ENCODE measurements at regions of chr7 and their contacts with region 1.

Region 1: DNA sequence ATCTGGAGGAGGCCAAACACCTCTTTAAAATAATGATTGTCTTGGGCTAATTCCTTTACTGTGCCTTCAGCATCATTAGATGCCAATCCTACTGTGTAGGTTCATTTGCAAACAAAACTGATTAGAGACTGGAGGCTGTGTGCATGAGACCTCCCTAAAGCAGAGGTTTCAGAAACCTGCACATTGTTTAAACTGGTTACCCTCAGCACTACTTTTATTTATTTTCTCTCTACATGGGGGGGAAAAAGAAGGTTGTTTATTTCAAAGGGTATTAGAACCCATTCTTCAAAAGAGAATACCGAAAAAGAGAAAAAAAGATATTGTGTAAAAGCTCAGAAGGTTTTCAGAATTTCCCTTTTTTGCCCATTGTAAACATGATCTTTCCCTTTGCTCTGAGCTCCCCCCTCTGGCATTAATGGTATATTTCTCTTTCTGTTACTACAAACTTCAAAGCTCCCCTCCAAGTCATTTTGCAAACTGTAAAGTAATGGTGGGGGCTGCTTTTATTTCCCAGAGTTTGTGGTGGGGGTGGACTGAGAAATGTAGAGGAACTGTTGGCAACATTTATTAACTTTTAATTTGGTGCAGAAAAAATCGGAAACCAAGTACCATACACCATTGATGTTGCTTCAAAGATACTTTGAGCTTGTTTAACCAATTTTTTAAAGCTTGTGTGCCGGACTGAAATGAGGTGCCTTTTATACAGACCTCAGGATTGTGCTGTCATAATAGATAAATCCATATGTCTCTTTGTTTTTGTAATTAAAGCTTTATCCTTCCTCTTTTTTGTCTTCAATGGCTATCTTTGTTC is 181.4 kb downstream of the EXOC4 start:
- DNase-seq: peak; percentile 33 to 46 (median 41)
- ATAC-seq: peak; percentile 86
- H3K4me3 ChIP-seq: no peak overlapping the region
- H3K27ac ChIP-seq: no peak overlapping the region
- H3K4me1 ChIP-seq: no peaks in the 10 kb centered on the region
- H3K27me3 ChIP-seq: no peaks in the 10 kb centered on the region
- CTCF ChIP-seq: peak; percentile 50 to 84 (median 56); a peak in 5 of 6 replicates
- EP300 ChIP-seq: no peak
- POLR2A ChIP-seq: no peak
- RAD21 ChIP-seq: peak; percentile 83 to 88

Region 2: DNA sequence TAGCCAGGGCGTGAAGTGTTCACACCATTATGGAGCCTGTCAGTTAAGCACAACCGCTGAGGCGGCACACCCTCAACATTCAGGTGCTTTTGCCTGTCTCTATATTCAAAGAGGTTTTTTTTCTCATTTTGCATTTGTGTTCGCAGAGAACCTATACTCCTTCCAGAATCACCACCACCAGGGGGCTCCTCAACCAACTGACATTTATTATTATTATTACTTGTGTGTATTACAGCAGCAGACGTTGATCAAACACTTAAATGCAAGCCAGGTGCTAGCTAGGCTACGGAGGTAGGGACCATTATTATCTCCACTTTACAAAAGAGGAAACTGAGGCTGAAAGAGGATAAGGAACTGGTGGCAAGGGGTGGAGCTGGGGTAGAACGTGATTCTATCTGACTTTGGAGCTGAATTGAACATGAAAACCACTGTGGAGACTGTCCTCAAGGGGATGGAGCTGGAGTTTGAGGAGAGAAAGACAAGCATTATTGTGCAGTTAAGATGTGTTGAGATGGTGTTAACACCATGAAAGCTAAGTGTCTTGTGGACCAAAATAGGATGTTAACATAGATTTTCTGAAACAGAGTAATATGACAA is 724.2 kb before region 1 on chr7:
- CTCF ChIA-PET with region 1: interaction called, 4 read pairs
- POLR2A ChIA-PET with region 1: no interaction called
- in situ Hi-C with region 1: loop called (anchors 10 kb)
- intact Hi-C with region 1: loop called (anchors 1 kb)
- DNase-seq: peak; percentile 36 to 49 (median 42)
- ATAC-seq: peak; percentile 84
- H3K4me3 ChIP-seq: no peak overlapping the region
- H3K27ac ChIP-seq: no peak overlapping the region
- H3K4me1 ChIP-seq: no peaks in the 10 kb centered on the region
- H3K27me3 ChIP-seq: peaks cover 33 to 42% of the 10 kb centered on the region in 2 experiments
- CTCF ChIP-seq: peak; percentile 59 to 70 (median 67); a peak in 5 of 6 replicates
- EP300 ChIP-seq: no peak
- POLR2A ChIP-seq: no peak
- RAD21 ChIP-seq: peak; percentile 52 to 73

Region 3: GRCh38 chr7:132930881-132931280 is 503.4 kb before region 1 on chr7:
- CTCF ChIA-PET with region 1: no interaction called
- POLR2A ChIA-PET with region 1: no interaction called
- in situ Hi-C with region 1: no loop called
- intact Hi-C with region 1: loop called (anchors 10 kb)
- DNase-seq: peak; percentile 36 to 44 (median 37)
- ATAC-seq: peak; percentile 81
- H3K4me3 ChIP-seq: no peak overlapping the region
- H3K27ac ChIP-seq: no peak overlapping the region
- H3K4me1 ChIP-seq: no peaks in the 10 kb centered on the region
- H3K27me3 ChIP-seq: no peaks in the 10 kb centered on the region
- CTCF ChIP-seq: peak; percentile 56 to 67 (median 57)
- EP300 ChIP-seq: no peak
- POLR2A ChIP-seq: no peak
- RAD21 ChIP-seq: peak in 1 of 2 experiments; percentile 62; a peak in 3 of 4 replicates

Region 4: GRCh38 chr7:133230591-133231194 is 203.6 kb before region 1 on chr7:
- CTCF ChIA-PET with region 1: no interaction called
- POLR2A ChIA-PET with region 1: no interaction called
- in situ Hi-C with region 1: no loop called
- intact Hi-C with region 1: loop called (anchors 10 kb)
- DNase-seq: peak; percentile 65 to 81 (median 76)
- ATAC-seq: peak; percentile 86
- H3K4me3 ChIP-seq: no peak overlapping the region
- H3K27ac ChIP-seq: no peak overlapping the region
- H3K4me1 ChIP-seq: no peaks in the 10 kb centered on the region
- H3K27me3 ChIP-seq: peaks cover 24 to 35% of the 10 kb centered on the region in 2 experiments
- CTCF ChIP-seq: peak; percentile 67 to 90 (median 85)
- EP300 ChIP-seq: no peak
- POLR2A ChIP-seq: no peak
- RAD21 ChIP-seq: peak; percentile 52 to 77

Region 5: DNA sequence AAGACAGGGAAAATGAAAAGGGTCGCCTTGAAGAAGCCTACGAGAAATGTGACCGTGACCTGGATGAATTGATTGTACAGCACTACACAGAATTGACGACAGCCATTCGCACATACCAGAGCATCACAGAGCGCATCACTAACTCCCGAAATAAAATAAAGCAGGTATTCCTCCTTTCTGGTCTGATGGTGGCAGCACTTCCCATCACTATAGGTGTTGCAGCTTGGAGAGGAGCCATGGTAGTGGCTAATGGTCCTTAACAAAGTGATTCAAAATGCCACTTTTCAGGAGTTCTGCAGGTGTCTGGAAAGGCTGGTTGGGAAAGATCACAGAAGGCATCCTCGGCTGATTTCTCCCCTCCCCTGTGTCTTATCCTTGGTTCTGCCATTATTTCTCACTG is 159.3 kb before region 1 on chr7:
- CTCF ChIA-PET with region 1: no interaction called
- POLR2A ChIA-PET with region 1: no interaction called
- in situ Hi-C with region 1: no loop called
- intact Hi-C with region 1: loop called (anchors 2 kb)
- DNase-seq: peak in 1 of 4 experiments; percentile 41
- ATAC-seq: peak; percentile 89
- H3K4me3 ChIP-seq: no peak overlapping the region
- H3K27ac ChIP-seq: no peak overlapping the region
- H3K4me1 ChIP-seq: no peaks in the 10 kb centered on the region; a peak in 1 of 5 replicates
- H3K27me3 ChIP-seq: no peaks in the 10 kb centered on the region
- CTCF ChIP-seq: peak; percentile 46 to 57 (median 49); a peak in 5 of 6 replicates
- EP300 ChIP-seq: no peak
- POLR2A ChIP-seq: no peak
- RAD21 ChIP-seq: peak; percentile 28 to 63; a peak in 2 of 4 replicates

Region 6: GRCh38 chr7:133445617-133446016 is 11.4 kb after region 1 on chr7:
- CTCF ChIA-PET with region 1: no interaction called
- POLR2A ChIA-PET with region 1: interaction called, 11 read pairs
- in situ Hi-C with region 1: no loop called
- intact Hi-C with region 1: no loop called
- DNase-seq: no peak
- ATAC-seq: no peak
- H3K4me3 ChIP-seq: no peak overlapping the region
- H3K27ac ChIP-seq: no peak overlapping the region
- H3K4me1 ChIP-seq: no peaks in the 10 kb centered on the region; a peak in 1 of 5 replicates
- H3K27me3 ChIP-seq: no peaks in the 10 kb centered on the region
- CTCF ChIP-seq: no peak
- EP300 ChIP-seq: no peak
- POLR2A ChIP-seq: no peak
- RAD21 ChIP-seq: no peak

Region 7: DNA sequence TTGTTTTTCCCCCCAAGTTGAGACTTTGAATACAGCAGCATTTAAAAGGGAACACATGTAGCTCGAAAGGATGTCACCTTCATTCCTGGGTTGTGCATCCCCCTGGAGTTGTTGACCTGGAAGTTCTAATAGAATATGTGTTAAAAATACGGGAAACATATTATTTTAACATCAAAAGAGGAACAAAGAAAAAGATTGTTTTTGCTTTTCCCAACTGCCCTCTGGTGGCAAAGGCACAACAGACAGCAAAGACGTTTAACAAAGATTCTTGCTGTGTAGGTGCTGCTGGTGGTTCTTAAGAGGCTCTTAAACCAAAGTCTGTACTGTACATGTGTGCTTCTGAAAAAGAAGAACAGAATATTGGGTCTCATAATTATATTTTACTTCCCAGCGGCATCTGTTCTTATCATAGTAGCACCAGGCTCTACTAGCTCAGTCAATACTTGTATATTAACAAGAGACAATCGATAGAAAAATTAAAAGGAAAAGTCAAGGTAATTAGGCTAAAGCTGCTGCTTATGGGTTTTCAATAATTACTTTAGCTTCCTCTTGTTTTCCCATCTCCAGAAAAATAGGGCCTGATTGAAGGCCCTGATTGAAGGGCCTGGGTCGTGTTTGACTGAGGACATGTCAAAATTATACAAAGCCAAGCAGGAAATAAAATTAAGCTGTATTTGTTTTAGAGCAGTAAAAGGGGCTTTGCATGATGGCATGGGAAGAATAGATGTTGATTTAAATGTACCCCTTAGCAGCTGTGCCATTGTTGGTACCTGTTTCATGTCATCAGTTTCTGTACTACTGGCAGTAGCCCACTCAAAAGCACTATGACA is 308.7 kb after region 1 on chr7:
- CTCF ChIA-PET with region 1: no interaction called
- POLR2A ChIA-PET with region 1: no interaction called
- in situ Hi-C with region 1: no loop called
- intact Hi-C with region 1: loop called (anchors 10 kb)
- DNase-seq: peak in 1 of 4 experiments; percentile 36
- ATAC-seq: peak; percentile 75
- H3K4me3 ChIP-seq: no peak overlapping the region
- H3K27ac ChIP-seq: no peak overlapping the region
- H3K4me1 ChIP-seq: no peaks in the 10 kb centered on the region
- H3K27me3 ChIP-seq: no peaks in the 10 kb centered on the region
- CTCF ChIP-seq: peak; percentile 36 to 71 (median 56); a peak in 5 of 6 replicates
- EP300 ChIP-seq: no peak
- POLR2A ChIP-seq: no peak
- RAD21 ChIP-seq: peak; percentile 47 to 66

Measured in K562 (cell line).